H1 (cell line): ENCODE measurements at regions of chr17 and their contacts with region 1.

Region 1: DNA sequence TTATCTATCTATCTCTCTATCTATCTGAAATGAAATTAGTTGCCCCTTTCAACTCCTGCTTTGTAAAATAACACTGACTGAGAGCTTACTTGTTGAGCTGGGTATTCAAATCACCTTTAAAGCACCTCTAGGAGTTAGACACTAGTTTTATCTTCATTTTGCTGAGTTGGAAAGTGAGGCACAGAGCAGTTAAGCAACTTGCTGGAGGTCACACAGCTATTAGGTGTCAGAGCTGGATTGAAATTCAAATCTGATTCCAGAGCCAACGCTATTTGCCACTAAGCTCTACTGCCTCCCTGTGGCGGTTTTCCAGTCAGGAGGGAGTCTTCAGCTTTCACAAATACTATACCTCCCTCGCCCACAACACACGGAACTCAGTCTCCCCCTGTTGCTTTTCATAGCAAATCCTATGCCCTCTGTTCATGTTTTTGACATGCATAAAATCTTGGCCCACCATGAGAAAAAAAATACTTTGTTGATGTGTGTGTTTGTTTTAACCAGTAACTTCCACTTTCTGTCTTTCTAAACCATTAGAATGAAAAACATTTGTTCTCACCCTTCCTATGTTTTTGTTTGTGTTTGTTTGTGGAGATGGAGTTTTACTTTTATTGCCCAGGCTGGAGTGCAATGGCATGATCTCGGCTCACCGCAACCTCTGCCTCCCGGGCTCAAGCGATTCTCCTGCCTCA is 74.8 kb upstream of the SMURF2 start:
- DNase-seq: peak in 1 of 2 experiments; percentile 55
- H3K4me3 ChIP-seq: no peak overlapping the region
- H3K27ac ChIP-seq: no peak overlapping the region
- H3K4me1 ChIP-seq: peaks cover 0 to under 1% (median 0%) of the 10 kb centered on the region in 4 experiments; a peak in 1 of 7 replicates
- H3K27me3 ChIP-seq: no peaks in the 10 kb centered on the region
- CTCF ChIP-seq: peak in 2 of 3 experiments; percentile 57 to 65; a peak in 3 of 4 replicates
- EP300 ChIP-seq: no peak
- POLR2A ChIP-seq: no peak
- RAD21 ChIP-seq: peak; percentile 63 to 73

Region 2: DNA sequence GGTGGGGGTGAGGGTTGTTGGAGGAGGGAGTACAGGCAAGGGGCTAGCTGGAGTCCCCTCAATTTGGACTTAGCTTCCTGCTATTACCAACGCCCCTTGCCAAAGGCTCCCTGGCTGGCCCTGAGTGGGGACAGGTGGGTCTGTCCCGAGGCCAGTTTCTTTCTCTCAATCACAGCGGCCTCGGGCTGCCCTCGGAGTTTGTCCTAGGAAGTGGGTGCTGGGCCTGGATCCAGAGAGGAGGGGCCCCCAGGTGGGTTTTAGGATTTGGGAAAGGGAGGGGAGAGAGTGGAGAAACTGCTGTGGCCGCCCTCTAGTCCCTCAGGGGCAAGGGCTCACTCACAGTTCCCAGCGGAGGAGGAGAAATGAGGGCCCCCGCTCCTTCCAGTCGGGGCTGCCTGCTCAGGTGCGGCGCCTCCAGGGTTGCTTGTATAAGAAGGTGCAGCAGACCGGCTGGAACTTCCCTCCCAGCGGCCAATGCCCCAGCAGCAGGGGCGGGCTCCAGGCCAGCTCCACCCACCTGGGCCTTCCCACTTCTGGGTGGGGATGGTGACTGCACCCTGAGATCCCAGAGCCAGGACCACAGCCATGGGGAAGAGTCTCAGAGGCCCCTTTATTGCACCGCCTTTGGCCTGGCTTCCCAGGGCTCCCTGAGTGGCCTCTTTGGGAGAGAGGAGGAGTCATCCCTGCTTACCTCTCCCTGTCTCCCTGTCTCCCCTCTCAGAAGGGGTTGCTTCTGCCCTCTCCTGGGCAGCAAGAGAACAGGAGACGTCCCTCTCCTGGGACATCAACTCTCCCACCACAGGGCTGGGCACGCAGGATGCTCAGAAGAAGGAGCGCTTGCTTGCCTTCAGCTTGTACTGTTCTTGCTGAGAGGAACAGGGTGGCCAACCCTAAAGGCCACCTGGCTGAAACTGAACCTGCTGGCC is 37.2 kb after region 1 on chr17:
- CTCF ChIA-PET with region 1: interaction called, 28 read pairs
- POLR2A ChIA-PET with region 1: no interaction called
- DNase-seq: peak; percentile 72 to 93
- H3K4me3 ChIP-seq: peak overlapping the region; percentile 46 to 69 (median 54)
- H3K27ac ChIP-seq: no peak overlapping the region; the same call in 1 of the 2 replicates
- H3K4me1 ChIP-seq: peaks cover 2 to 20% (median 6%) of the 10 kb centered on the region in 4 experiments
- H3K27me3 ChIP-seq: peaks cover 18 to 41% (median 37%) of the 10 kb centered on the region in 4 experiments
- CTCF ChIP-seq: peak; percentile 54 to 85 (median 79)
- EP300 ChIP-seq: no peak
- POLR2A ChIP-seq: peak in 1 of 2 experiments; percentile 75; a peak in 2 of 3 replicates
- RAD21 ChIP-seq: peak; percentile 54